ENCODE measurements at regions of chr3 and their contacts with region 1.

Region 1: DNA sequence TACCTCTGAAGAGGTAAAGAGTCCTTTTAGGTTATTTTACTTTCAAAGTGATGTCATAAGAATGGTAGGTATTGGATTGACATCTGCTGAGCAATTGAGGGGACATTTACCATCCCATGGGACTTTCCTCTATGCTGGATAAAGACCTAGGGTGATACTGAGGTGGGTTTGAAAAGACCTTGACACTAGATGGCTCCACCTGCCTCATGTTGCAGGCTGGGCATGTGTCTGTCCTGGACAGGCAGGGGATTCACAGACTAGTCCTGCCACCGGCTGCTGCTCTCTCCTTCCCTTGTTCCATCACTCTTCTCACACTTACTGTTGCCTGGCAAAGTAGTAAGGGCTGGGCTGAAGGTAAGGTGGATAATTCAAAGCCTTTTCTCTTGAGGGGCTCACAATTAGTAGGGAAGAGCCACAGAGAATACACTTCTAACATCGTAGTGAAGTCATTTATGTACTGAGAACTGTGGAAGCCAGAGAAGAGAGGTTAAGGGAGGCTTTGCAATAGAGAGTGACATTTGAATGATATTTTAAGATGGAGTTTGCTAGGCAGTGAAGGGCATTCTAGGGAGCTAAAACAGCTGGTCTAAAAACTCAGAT is 27.7 kb downstream of the TRAK1 start:
- DNase-seq: peak; percentile 54
- ATAC-seq: peak; percentile 86
- H3K4me3 Mint-ChIP-seq: no peak overlapping the region
- H3K27ac Mint-ChIP-seq: peak overlapping the region; percentile 37; the same call in 1 of the 2 replicates
- H3K4me1 Mint-ChIP-seq: peaks cover 42% of the 10 kb centered on the region
- H3K27me3 Mint-ChIP-seq: no peaks in the 10 kb centered on the region
- CTCF ChIP-seq: peak; percentile 34; the same call in 1 of the 2 replicates

Region 2: DNA sequence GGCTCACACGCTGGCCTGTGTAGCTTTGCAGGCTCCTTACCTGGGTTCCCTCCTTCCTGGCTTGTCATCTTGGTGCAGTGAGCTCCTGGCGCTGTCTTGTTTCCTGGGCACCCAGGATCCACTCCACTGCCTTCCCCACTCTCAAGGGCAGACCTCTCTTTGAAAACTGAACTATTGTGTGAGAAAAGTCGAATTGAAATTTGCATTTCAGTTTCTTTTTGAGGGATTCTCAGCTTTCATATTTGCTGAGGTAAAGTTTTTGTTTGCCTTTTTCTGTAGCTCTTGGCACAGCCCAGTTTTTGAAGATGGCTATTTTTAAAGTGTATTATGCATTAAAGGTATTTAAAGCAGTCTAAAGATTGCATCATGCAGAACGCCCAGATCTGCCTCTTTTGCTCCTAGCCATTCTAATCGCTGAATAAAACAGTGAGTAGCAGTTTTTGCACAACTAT is 77.0 kb after region 1 on chr3:
- CTCF ChIA-PET with region 1: interaction called, 164 read pairs
- POLR2A ChIA-PET with region 1: interaction called, 3 read pairs
- DNase-seq: no peak
- ATAC-seq: no peak
- H3K4me3 Mint-ChIP-seq: no peak overlapping the region
- H3K27ac Mint-ChIP-seq: peak overlapping the region; percentile 73; the same call in 1 of the 2 replicates
- H3K4me1 Mint-ChIP-seq: peaks cover 30% of the 10 kb centered on the region
- H3K27me3 Mint-ChIP-seq: no peaks in the 10 kb centered on the region
- CTCF ChIP-seq: no peak

Measured in WTC11 (cell line).